Mammary epithelial cell (primary cell): ENCODE measurements at regions of chr14 and their contacts with region 1.

Region 1: DNA sequence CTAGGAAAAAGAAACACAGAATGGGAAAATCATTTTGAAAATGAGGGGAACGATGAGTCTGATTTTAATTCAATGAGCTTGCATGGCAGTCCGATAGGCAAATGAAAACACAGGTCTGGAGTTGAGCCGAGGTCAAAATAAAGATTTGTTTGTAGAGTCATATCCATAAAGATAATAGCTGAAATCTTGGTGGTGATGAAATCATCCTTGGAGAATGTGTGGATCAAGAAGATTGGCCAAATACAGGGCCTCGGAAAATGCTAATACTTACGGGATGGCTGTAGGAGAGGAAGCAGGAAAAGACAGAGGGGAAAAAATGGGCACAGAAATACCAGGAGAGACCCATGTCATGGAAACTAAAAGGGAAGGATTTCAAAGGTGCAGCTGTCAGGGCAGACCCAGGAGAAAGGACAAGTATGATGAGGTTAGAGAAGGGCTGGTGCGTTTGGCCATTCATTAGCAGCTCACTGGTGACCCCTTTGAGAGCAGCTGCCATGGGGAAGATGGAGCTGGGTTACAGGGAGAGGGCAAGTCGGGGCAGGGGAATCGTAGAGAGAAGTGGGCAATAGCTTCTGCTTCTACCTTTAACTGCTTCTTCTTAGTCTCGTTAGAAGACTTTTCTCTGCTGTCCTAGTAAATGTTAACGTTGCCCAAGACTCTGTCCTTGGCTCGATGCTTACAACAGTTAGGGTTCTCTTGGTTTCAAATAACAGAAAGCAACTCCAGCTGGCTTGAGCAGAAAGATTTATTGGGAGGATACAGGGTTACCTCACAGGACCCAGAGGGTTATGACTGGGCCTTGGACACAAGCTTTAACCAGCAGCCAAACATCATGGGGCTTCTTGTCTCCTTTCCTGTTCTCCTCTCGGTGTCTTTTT is 161.8 kb downstream of the EFCAB11 start:
- DNase-seq: no peak
- H3K4me3 ChIP-seq: no peak overlapping the region
- H3K27ac ChIP-seq: no peak overlapping the region
- H3K4me1 ChIP-seq: no peaks in the 10 kb centered on the region
- H3K27me3 ChIP-seq: no peaks in the 10 kb centered on the region
- CTCF ChIP-seq: no peak

Region 2: DNA sequence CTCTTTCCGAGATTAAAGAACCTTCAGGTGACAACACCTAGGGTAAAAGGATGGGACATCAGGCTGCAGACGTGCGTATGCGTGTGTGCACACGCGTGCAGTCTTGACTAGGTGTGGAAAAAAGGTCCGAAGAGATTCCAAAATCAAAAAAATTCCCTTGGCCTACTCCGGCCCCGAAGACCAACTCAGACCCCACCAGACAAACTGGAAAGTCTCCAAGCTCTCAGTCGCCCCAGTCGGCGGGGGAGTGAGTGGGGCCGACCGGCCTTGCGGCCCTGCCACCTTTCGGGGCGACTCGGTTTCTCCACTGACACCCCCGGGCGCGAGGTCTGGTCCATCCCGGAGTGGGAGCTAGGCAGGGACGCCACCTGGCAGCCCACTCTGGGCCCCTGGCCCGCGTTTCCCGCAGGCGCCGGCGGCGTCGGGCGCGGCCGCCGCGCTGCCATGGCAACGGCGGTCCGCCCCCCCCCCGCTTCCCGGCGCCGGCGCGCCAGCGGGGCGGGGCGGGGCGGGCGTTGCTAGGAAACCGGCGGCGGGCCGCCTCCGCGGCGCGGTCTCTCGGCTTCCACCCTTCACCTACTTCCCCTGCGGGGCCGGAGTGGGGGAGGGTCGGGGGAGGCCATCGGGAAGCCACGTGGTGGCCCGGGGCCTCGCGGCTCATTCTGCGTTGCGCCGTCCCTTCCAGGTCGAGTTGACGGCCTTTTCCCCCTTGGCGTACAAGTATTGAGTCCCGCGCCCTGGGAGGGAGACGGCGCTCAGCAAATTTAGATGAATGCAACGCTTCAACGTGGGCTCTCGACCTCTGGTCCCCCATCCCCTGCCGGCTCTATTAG is 91.3 kb before region 1 on chr14:
- CTCF ChIA-PET with region 1: no interaction called
- dilution Hi-C with region 1: loop called (anchors 5 kb)
- in situ Hi-C with region 1: no loop called
- intact Hi-C with region 1: no loop called
- DNase-seq: peak; percentile 39
- H3K4me3 ChIP-seq: peak overlapping the region; percentile 42 to 56 (median 50)
- H3K27ac ChIP-seq: no peak overlapping the region
- H3K4me1 ChIP-seq: peaks cover 11% of the 10 kb centered on the region
- H3K27me3 ChIP-seq: no peaks in the 10 kb centered on the region
- CTCF ChIP-seq: no peak

Region 3: GRCh38 chr14:89911010-89911919 is 118.5 kb after region 1 on chr14:
- CTCF ChIA-PET with region 1: no interaction called
- dilution Hi-C with region 1: no loop called
- in situ Hi-C with region 1: no loop called
- intact Hi-C with region 1: no loop called
- DNase-seq: no peak
- H3K4me3 ChIP-seq: no peak overlapping the region
- H3K27ac ChIP-seq: no peak overlapping the region
- H3K4me1 ChIP-seq: peaks cover 6% of the 10 kb centered on the region
- H3K27me3 ChIP-seq: no peaks in the 10 kb centered on the region
- CTCF ChIP-seq: no peak